ENCODE measurements at regions of chr15 and their contacts with region 1.

Region 1: GRCh38 chr15:70810916-70811578 is 42.9 kb downstream of the LARP6 start:
- DNase-seq: no peak
- ATAC-seq: peak; percentile 56
- H3K4me3 Mint-ChIP-seq: no peak overlapping the region
- H3K27ac Mint-ChIP-seq: no peak overlapping the region
- H3K4me1 Mint-ChIP-seq: peaks cover 9% of the 10 kb centered on the region
- H3K27me3 Mint-ChIP-seq: no peaks in the 10 kb centered on the region; the same call in 1 of the 2 replicates
- CTCF ChIP-seq: no peak

Region 2: DNA sequence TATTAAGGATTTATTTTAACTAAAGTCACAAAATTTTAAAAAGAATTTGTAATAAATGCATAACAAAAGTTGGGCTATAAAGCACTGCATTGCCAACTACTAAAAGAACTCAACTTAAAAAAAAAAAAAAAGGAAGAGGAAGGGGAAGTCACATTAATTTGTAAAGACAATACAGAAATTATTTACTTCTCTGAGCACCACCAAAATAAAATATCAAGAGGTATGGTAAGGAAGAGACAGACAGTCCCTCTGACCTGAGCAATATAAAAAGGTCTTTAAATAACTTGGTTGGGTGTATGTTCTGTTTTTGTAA is 131.2 kb before region 1 on chr15:
- CTCF ChIA-PET with region 1: interaction called, 23 read pairs
- POLR2A ChIA-PET with region 1: no interaction called
- DNase-seq: no peak
- ATAC-seq: no peak
- H3K4me3 Mint-ChIP-seq: no peak overlapping the region
- H3K27ac Mint-ChIP-seq: no peak overlapping the region
- H3K4me1 Mint-ChIP-seq: peaks cover 5% of the 10 kb centered on the region; the same call in 1 of the 2 replicates
- H3K27me3 Mint-ChIP-seq: no peaks in the 10 kb centered on the region
- CTCF ChIP-seq: no peak

Region 3: GRCh38 chr15:70799667-70800450 is 11.2 kb before region 1 on chr15:
- CTCF ChIA-PET with region 1: interaction called, 11 read pairs
- POLR2A ChIA-PET with region 1: no interaction called
- DNase-seq: no peak
- ATAC-seq: no peak
- H3K4me3 Mint-ChIP-seq: no peak overlapping the region
- H3K27ac Mint-ChIP-seq: no peak overlapping the region
- H3K4me1 Mint-ChIP-seq: no peaks in the 10 kb centered on the region
- H3K27me3 Mint-ChIP-seq: no peaks in the 10 kb centered on the region
- CTCF ChIP-seq: no peak